HCT116 (cell line): ENCODE measurements at regions of chr3 and their contacts with region 1.

Region 1: GRCh38 chr3:150495563-150496168 is 50.6 kb downstream of the SERP1 start:
- DNase-seq: peak; percentile 35
- ATAC-seq: peak; percentile 62; the same call in 1 of the 2 replicates
- H3K4me3 ChIP-seq: no peak overlapping the region
- H3K27ac ChIP-seq: no peak overlapping the region
- H3K4me1 ChIP-seq: no peaks in the 10 kb centered on the region
- H3K27me3 ChIP-seq: no peaks in the 10 kb centered on the region
- CTCF ChIP-seq: peak; percentile 53 to 95 (median 78)
- POLR2A ChIP-seq: no peak
- RAD21 ChIP-seq: peak; percentile 94

Region 2: DNA sequence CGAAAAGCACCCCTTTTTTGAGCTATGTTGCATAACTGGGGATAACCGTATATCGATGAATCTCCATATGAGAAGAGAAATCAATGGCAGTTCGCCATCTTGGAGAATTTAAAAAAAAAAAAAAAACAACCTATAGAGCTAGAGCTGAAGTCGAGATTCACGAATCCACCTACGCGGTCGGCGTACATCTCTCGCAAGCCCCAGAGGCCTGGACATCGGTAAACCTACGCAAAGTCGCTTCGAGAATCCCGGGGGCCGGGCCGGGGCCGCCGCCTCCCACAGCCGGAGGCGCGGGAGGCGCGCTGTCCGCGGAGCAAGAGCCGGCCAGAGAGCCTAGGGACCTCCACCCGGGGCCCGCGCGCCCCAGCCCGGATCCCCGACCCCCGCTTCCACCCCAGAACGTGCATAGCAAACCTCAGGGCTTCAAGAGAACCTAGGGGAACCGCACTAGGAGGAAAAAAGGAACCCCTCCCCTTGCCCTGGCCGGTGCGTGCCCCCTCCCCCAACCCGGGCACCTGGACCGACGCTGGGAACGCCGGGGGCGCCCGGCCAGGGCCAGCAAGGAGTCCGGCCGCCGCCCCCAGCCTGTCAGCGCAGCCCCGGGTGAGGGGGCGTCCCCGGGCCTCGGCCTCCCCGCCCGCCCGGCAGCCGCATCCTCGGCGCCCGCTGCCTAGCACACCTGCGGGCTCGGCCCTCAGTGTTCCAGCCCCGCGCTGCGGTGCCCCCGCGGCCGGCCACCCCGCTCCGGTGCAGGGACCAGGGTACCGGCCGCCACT is 525.5 kb before region 1 on chr3:
- CTCF ChIA-PET with region 1: interaction called, 8 read pairs
- POLR2A ChIA-PET with region 1: no interaction called
- RAD21 ChIA-PET with region 1: no interaction called
- intact Hi-C with region 1: loop called (anchors 10 kb)
- DNase-seq: peak; percentile 73
- ATAC-seq: peak; percentile 58
- H3K4me3 ChIP-seq: peak overlapping the region; percentile 62 to 66
- H3K27ac ChIP-seq: peak overlapping the region; percentile 89
- H3K4me1 ChIP-seq: peaks cover 7 to 26% of the 10 kb centered on the region in 2 experiments; a peak in 3 of 4 replicates
- H3K27me3 ChIP-seq: no peaks in the 10 kb centered on the region
- CTCF ChIP-seq: no peak
- POLR2A ChIP-seq: no peak
- RAD21 ChIP-seq: no peak

Region 3: DNA sequence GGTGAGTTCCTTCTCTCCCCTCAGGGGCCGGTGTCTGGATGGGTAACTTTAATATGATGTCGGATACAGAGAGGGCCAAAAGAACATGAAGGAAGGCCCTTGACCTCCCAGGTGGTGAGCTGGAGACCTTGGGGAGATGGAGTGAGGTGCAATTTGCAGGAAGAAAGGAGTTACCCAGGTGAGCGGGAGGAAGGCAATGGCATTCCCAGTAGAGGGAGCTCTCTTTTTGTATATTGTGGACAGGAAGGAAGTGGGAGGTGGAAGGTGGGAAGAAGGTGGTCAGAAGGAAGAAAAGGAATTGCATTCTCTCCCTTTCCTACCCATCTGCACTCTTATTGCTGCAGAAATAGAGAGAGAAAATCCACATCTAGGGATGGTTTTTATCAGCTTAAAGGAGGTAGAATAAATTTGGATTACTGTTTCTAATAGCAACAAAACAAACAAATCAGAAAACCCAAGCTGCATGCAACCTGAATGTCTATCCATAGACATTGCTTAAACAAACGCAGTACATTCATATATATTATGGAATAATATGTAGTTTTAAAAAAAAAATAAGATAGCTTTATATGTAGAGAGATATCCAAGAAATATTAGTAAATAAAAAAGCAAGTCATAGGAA is 256.6 kb before region 1 on chr3:
- CTCF ChIA-PET with region 1: interaction called, 69 read pairs
- POLR2A ChIA-PET with region 1: interaction called, 3 read pairs
- RAD21 ChIA-PET with region 1: interaction called, 6 to 10 read pairs
- intact Hi-C with region 1: loop called (anchors 1 kb)
- DNase-seq: peak; percentile 56
- ATAC-seq: peak; percentile 92
- H3K4me3 ChIP-seq: no peak overlapping the region
- H3K27ac ChIP-seq: peak overlapping the region; percentile 16; the same call in 1 of the 2 replicates
- H3K4me1 ChIP-seq: peaks cover 22 to 37% of the 10 kb centered on the region in 2 experiments
- H3K27me3 ChIP-seq: no peaks in the 10 kb centered on the region
- CTCF ChIP-seq: peak; percentile 80 to 87 (median 81)
- POLR2A ChIP-seq: no peak
- RAD21 ChIP-seq: peak; percentile 91

Region 4: GRCh38 chr3:150303776-150304175 is 191.9 kb before region 1 on chr3:
- CTCF ChIA-PET with region 1: interaction called, 5 read pairs
- POLR2A ChIA-PET with region 1: no interaction called
- RAD21 ChIA-PET with region 1: no interaction called
- intact Hi-C with region 1: loop called (anchors 2 kb)
- DNase-seq: peak; percentile 57
- ATAC-seq: peak; percentile 87
- H3K4me3 ChIP-seq: no peak overlapping the region
- H3K27ac ChIP-seq: no peak overlapping the region
- H3K4me1 ChIP-seq: peaks cover 6 to 44% of the 10 kb centered on the region in 2 experiments
- H3K27me3 ChIP-seq: no peaks in the 10 kb centered on the region
- CTCF ChIP-seq: peak; percentile 81 to 97 (median 86)
- POLR2A ChIP-seq: no peak
- RAD21 ChIP-seq: peak; percentile 89

Region 5: DNA sequence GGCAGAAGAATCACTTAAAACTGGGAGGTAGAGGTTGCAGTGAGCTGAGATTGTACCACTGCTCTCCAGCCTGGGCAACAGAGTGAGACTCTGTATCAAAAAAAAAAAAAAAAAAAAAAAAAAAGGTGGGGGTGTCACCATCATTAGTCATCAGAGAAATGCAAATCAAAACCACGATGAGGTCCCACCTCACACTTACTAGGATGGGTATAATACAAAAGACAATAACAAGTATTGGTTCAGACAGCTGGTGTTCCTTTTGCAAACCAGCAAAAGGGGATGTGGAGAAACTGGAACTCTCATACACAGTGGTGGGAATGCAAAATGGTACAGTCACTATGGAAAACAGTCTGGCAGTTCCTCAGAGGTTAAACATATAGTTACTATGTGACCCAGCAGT is 166.3 kb before region 1 on chr3:
- CTCF ChIA-PET with region 1: no interaction called
- POLR2A ChIA-PET with region 1: no interaction called
- RAD21 ChIA-PET with region 1: no interaction called
- intact Hi-C with region 1: no loop called
- DNase-seq: no peak
- ATAC-seq: no peak
- H3K4me3 ChIP-seq: no peak overlapping the region
- H3K27ac ChIP-seq: no peak overlapping the region
- H3K4me1 ChIP-seq: peaks cover 6 to 29% of the 10 kb centered on the region in 2 experiments; a peak in 3 of 4 replicates
- H3K27me3 ChIP-seq: no peaks in the 10 kb centered on the region
- CTCF ChIP-seq: no peak
- POLR2A ChIP-seq: no peak
- RAD21 ChIP-seq: no peak